Mucosa of descending colon (tissue), 3 donors: ENCODE measurements at regions of chr1 and their contacts with region 1.

Region 1: DNA sequence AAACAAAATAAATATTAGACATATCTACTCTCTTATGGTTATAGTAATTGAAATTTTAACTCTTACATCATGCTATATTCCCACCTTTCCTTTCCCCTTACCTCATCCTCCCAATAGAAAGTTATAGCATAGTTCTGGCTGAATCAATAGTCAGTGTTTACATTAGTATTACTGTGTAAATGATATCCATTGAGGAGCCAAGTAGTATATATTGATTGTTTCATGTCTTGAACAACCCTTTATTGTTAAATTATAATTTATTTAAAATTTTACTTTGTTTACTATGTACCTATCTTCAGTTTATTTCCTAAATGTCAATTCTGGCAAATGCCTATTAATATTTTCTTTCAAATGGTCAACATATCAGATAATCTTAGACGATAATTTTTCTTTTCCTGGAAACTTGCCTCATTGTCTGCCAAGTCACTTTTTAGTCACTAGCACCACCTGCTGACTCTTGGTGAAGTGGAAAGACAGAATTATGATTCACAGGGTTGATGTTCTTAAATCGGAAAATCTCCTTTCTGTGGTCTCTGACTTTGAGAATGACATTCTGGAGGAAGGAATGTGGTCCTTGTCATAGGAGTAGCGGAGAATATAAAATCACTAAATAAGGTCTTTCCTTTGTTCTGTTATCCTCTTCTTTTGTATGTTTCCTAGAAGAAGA is 8.7 kb downstream of the HJV start:
- DNase-seq: peak in 1 of 3 donors; percentile 86
- ATAC-seq: peak; percentile 70
- H3K4me3 ChIP-seq: no peak overlapping the region
- H3K4me1 ChIP-seq: peaks cover 7% of the 10 kb centered on the region
- CTCF ChIP-seq: peak; percentile 36

Region 2: GRCh38 chr1:145845514-145846161 is 167.2 kb before region 1 on chr1 and contains the start of gene NUDT17:
- intact Hi-C with region 1: loop called in 1 of 2 experiments (anchors 5 kb)
- DNase-seq: peak; percentile 82 to 87 (median 83)
- ATAC-seq: peak; percentile 93
- H3K4me3 ChIP-seq: no peak within 1 kb of the TSS
- H3K4me1 ChIP-seq: peaks cover 6% of the 10 kb centered on the region
- CTCF ChIP-seq: peak; percentile 94
- total RNA-seq, gene NUDT17: 1.1 to 2.5 (median 1.3) TPM

Region 3: DNA sequence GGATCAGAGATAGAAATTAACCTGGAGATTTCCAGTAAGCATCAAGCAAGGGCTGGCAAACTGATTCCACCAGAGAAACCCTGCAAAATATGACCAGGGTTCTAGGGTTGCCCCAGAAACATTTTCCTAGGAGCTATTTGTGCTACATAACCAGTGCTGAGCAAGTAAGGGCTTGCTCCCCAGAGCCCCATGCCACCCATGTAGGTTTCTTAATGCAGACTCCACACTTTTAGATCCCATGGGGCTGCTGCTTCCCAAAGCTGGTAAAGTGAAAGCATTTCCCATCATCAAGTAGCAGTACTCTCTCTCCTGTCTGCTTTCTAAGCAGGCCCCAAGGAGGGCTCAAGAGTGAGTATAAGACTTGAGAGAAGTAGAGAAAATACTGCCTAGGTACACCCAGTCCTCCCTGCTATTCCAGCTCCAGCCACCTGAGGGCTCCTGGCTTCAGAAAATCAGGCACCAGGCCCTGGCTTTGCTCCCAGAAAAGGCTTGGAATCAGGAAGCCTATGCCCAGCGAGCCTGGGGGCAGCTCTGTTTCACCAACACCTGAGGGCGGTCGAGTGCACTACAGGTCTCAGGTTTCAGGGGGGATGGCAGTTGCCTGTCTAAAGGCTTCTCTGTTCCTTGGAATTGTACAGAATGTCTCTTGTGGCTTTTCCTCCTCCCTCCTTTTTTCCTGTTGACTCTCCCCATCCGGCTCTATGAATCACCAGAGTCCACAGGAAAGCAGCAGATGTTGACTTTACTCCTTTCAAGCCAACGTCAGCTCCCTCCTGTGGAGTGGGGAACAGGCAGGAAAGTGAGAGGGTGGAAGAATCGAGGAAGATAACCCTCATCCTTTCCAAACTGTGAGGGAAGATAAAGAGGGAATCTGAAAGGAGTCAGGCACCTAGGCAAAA is 121.0 kb before region 1 on chr1:
- intact Hi-C with region 1: loop called in 1 of 2 experiments (anchors 10 kb)
- DNase-seq: peak; percentile 87 to 99 (median 94)
- ATAC-seq: peak; percentile 94
- H3K4me3 ChIP-seq: no peak overlapping the region
- H3K4me1 ChIP-seq: peaks cover 12% of the 10 kb centered on the region
- CTCF ChIP-seq: peak; percentile 88

Region 4: DNA sequence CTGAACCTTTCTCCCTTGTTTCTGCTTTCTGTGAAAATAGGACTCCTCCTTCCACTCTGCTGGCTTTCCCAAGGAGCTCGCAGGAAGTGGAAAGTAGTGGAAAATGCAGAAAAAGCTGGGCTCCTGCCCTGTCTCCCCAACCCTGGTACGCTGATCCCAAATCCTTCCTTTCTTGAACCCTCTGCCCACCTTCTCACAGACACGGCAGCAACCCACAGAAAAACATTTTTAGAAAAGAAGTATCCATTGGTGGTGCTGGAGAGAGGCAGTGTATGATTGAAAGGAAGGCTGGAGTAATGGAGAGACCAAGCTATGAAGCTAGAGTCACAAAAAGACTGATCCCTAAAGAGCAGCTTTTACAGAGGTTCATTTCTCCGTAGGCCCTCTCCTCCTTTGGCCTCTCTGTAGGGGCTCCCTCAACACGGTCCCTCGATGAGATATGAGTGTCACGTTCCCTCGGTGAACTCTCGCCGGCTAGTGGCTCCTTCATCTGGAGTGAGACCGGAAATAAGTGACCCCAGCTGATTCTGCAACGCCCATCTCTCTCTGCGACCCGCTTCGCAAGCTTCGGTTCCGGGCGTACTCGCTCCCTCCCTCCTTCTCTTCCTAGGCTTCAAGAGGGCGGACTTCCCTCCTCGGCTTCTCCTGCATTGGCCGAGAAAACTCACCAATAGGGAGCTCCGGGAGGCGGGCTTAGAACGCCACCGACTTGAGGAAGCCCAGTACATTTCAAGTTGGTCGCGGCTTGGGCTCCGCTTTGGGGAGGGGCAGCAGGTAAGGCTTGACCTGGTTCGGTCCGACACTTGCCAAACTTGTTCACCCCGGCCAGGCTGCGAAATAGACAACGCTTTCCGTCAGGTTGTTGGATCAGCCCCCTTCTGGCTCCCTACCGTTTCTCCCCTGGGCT is 48.6 kb before region 1 on chr1 and contains the starts of genes ANKRD34A and POLR3GL:
- intact Hi-C with region 1: no loop called
- DNase-seq: peak; percentile 96 to 98 (median 98)
- ATAC-seq: peak; percentile 94
- H3K4me3 ChIP-seq: peak within 1 kb of the TSS; percentile 16
- H3K4me1 ChIP-seq: peaks cover 39% of the 10 kb centered on the region
- CTCF ChIP-seq: no peak
- total RNA-seq, gene ANKRD34A: 0.14 to 0.63 (median 0.41) TPM
- total RNA-seq, gene POLR3GL: 15.7 to 26.8 (median 19.5) TPM